Sigmoid colon (tissue), 7 donors: ENCODE measurements at regions of chr1 and their contacts with region 1.

Region 1: DNA sequence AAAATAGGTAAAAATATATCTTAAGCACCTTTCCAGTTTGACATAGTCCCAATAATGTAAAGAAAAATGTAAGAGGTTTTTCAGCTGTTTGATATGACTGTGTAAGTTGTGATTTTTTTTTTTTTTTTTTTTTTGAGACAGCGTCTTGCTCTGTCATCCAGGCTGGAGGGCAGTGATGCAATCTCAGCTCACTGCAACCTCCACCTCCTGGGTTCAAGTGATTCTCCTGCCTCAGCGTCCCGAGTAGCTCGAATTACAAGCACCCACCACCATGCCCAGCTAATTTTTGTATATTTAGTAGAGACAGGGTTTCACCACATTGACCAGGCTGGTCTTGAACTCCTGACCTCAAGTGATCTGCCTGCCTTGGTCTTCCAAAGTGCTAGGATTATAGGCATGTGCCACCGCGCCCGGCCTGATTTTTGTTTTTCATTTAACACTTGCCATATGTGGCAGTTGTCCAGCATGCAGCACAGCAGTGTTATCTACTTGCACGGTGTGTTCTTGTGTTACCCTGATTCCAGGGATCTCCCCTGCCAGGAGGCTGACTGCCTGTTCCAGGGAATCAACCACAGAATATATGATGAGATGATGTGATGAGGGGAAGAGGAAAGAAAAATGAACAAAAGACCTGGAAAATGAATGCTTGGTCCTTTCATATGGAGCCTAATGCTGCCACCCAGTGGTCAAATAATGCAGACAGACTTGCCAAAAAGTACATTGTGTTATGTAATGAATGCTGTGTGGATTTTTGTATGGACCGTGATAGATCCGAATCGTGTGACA is 79.0 kb downstream of the RAVER2 start:
- DNase-seq: no peak
- H3K4me3 ChIP-seq: no peak overlapping the region
- H3K27ac ChIP-seq: no peak overlapping the region
- H3K4me1 ChIP-seq: peaks cover 0 to 7% (median 2%) of the 10 kb centered on the region in 4 donors
- H3K27me3 ChIP-seq: no peaks in the 10 kb centered on the region
- CTCF ChIP-seq: peak; percentile 68 to 83 (median 76)
- EP300 ChIP-seq: no peak
- POLR2A ChIP-seq: no peak

Region 2: DNA sequence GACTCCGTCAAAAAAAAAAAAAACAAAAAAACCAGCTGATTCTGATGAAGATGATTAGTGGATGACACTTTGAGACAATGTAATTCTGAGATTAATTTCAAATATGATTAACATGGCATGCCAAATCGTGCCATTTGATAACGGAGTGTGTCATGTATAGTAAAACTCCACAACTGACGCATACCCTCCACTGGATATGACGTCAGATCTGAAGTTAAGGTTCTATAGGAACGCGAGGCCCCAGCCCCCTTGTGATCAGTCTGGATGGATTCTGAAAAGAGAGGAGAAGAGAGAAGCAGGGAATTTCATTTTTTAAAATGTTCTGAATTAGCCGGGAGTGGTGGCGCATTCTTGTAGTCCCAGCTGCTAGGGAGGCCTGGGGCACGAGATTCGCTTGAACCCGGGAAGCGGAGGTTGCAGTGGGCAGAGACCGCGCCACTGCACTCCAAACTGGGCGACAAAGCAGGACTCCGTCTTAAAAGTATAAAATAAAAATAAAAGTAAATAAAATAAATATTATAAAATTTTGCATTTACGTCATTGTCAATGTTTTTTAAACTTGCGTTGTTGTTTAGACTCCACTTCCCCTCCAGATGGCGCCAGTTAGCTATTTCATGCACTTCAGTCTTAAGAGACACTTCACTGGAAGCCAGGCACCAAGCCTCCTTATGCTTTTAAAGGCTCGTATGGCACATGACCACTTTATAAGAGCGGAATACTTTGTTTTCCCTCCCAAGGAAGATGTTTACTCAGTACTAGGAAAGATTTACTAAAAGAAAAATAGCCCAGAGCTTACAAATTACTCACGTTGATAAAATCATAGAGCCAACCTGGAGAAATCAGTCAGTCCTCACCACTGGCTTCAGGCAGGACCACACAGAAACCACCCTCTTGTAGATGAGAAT is 555.0 kb before region 1 on chr1:
- intact Hi-C with region 1: loop called (anchors 1 kb)
- DNase-seq: peak; percentile 83
- H3K4me3 ChIP-seq: no peak overlapping the region
- H3K27ac ChIP-seq: no peak overlapping the region
- H3K4me1 ChIP-seq: peaks cover 0 to 19% (median 6%) of the 10 kb centered on the region in 4 donors
- H3K27me3 ChIP-seq: no peaks in the 10 kb centered on the region
- CTCF ChIP-seq: peak; percentile 47 to 74 (median 66)
- EP300 ChIP-seq: no peak
- POLR2A ChIP-seq: no peak

Region 3: GRCh38 chr1:64553281-64553680 is 270.6 kb before region 1 on chr1:
- intact Hi-C with region 1: no loop called
- DNase-seq: no peak
- H3K4me3 ChIP-seq: no peak overlapping the region
- H3K27ac ChIP-seq: no peak overlapping the region
- H3K4me1 ChIP-seq: peaks cover 0 to 12% (median 7%) of the 10 kb centered on the region in 4 donors
- H3K27me3 ChIP-seq: no peaks in the 10 kb centered on the region
- CTCF ChIP-seq: no peak
- EP300 ChIP-seq: no peak
- POLR2A ChIP-seq: no peak

Region 4: DNA sequence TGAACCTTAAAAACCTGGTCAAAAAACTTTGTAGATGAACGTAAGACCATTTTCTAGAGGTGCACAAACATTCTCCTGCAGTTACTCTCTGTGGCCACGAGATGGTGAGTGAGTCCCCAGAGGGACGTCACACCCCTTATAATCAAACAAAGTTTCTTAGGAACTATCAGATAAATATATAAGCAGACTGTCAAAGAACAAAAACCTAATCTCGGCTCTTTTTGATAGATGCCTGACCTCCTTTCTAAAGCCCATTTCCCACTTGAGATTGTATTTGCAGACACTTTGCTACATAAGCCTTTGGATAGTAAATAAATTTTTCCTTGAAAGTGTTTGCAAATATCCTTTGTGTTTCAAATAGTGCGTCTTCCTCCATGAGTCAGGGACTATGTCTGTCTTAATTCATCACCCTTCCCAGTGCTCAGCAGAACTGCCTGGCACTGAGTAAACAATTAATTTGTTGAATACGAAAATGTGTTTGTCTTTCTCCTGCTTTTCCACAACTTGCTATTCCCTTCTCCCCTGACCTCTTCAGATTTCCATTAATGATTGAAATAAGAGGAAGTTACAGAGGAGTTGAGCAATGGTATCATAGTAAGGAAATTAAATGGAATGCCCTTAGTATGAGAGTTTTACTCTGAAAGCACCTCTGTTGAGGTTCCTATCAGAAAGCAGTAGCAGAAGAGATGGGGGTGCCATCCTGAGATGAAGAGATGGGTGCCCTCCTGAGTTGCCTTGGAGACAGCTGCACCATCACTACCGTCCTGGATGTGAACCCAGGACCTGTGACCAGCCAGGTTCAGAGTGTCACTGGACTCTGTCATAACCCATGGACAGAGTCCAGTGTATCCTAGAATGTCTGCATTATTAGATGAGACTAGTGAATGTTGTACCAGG is 136.8 kb before region 1 on chr1:
- intact Hi-C with region 1: loop called (anchors 2 kb)
- DNase-seq: no peak
- H3K4me3 ChIP-seq: no peak overlapping the region
- H3K27ac ChIP-seq: no peak overlapping the region
- H3K4me1 ChIP-seq: peaks cover 0 to 23% (median 12%) of the 10 kb centered on the region in 4 donors
- H3K27me3 ChIP-seq: no peaks in the 10 kb centered on the region
- CTCF ChIP-seq: peak; percentile 46 to 83 (median 74)
- EP300 ChIP-seq: no peak
- POLR2A ChIP-seq: no peak

Region 5: GRCh38 chr1:64744492-64745180 is 79.2 kb before region 1 on chr1 and contains the start of gene RAVER2:
- intact Hi-C with region 1: loop called (anchors 1 kb)
- DNase-seq: peak; percentile 87
- H3K4me3 ChIP-seq: peak within 1 kb of the TSS; percentile 74 to 91 (median 82)
- H3K27ac ChIP-seq: peak within 1 kb of the TSS; percentile 83 to 91 (median 90)
- H3K4me1 ChIP-seq: peaks cover 0 to 34% (median 24%) of the 10 kb centered on the region in 4 donors
- H3K27me3 ChIP-seq: no peaks in the 10 kb centered on the region
- CTCF ChIP-seq: peak in 2 of 4 experiments; percentile 20 to 46
- EP300 ChIP-seq: no peak
- POLR2A ChIP-seq: no peak
- total RNA-seq, gene RAVER2: 12.7 to 22.2 (median 17.4) TPM